ENCODE measurements at regions of chr1 and their contacts with region 1.

Region 1: DNA sequence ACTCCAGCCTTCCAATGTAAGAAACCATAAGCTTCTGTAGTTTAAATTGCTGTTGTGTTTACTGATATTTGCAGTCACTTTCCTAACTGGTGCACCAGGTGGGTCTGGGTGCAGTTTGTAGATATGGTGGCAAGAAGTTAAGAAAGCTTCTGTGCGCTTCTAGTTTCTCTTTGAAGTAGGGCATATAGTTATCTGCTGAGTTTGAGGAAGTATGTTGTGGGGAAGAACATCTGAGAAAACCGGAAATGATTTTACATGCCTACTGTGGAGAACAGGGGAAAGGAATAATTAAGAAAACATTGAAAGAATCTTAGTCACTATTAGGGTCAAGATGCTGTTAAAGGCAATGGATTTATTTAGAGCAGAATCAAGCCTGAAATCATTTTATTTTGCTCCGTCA is 14.9 kb upstream of the SLC44A5 start:
- DNase-seq: no peak
- ATAC-seq: no peak
- H3K4me3 ChIP-seq: no peak overlapping the region
- H3K27ac ChIP-seq: no peak overlapping the region
- H3K4me1 ChIP-seq: no peaks in the 10 kb centered on the region
- H3K27me3 ChIP-seq: no peaks in the 10 kb centered on the region
- CTCF ChIP-seq: no peak

Region 2: GRCh38 chr1:75265792-75266191 is 360.0 kb before region 1 on chr1:
- intact Hi-C with region 1: loop called in 1 of 2 experiments (anchors 10 kb)
- DNase-seq: peak in 2 of 4 donors; percentile 6 to 28
- ATAC-seq: peak; percentile 56
- H3K4me3 ChIP-seq: no peak overlapping the region
- H3K27ac ChIP-seq: no peak overlapping the region
- H3K4me1 ChIP-seq: no peaks in the 10 kb centered on the region
- H3K27me3 ChIP-seq: no peaks in the 10 kb centered on the region
- CTCF ChIP-seq: peak; percentile 9 to 42

Region 3: DNA sequence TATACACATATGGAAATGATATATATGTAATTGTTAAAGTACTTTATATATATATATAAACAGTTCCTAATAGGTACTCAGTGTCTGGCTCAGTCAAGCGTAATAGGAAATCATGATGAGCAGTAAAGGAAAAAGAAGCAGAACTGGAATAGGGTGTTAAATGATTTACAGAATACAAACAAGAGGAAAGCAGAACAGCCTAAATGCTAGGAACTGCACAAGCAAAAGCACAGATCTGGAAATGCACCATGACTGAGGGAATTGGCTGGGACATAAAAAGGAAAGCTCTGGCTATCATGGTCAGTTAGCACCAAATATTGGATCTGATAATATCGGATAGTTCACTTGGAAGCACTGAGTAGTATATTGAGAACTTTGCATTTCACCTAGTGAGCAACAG is 66.7 kb before region 1 on chr1:
- intact Hi-C with region 1: no loop called
- DNase-seq: peak in 1 of 4 donors; percentile 2
- ATAC-seq: no peak
- H3K4me3 ChIP-seq: no peak overlapping the region
- H3K27ac ChIP-seq: no peak overlapping the region
- H3K4me1 ChIP-seq: no peaks in the 10 kb centered on the region
- H3K27me3 ChIP-seq: no peaks in the 10 kb centered on the region
- CTCF ChIP-seq: no peak

Region 4: GRCh38 chr1:75884437-75884836 is 258.6 kb after region 1 on chr1:
- intact Hi-C with region 1: no loop called
- DNase-seq: no peak
- ATAC-seq: no peak
- H3K4me3 ChIP-seq: no peak overlapping the region
- H3K27ac ChIP-seq: no peak overlapping the region
- H3K4me1 ChIP-seq: no peaks in the 10 kb centered on the region
- H3K27me3 ChIP-seq: no peaks in the 10 kb centered on the region
- CTCF ChIP-seq: no peak

Measured in left lung (tissue), 14 donors.